ENCODE measurements at regions of chr9 and their contacts with region 1.

Region 1: DNA sequence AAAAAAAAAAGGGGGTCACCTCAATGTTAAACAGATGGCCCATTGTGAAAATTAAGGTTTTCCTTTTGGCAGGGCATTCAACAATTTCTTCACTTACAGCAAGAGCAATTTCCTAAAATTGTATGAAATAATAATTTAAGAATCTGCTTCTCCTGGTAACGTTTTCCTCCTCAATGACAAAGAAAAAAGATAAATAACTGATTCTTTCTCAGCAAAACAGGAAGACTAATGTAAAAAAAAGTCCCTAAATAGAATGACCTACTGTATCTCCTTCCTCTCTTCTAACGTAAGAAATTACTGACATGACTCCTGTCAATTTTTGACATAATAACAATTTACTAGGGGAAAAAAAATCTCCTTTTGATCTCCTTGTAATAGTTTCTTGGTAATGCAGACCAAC is 25.5 kb downstream of the ABHD17B start:
- DNase-seq: no peak
- ATAC-seq: no peak
- H3K4me3 Mint-ChIP-seq: no peak overlapping the region
- H3K27ac Mint-ChIP-seq: no peak overlapping the region
- H3K4me1 Mint-ChIP-seq: peaks cover 32% of the 10 kb centered on the region
- H3K27me3 Mint-ChIP-seq: no peaks in the 10 kb centered on the region

Region 2: DNA sequence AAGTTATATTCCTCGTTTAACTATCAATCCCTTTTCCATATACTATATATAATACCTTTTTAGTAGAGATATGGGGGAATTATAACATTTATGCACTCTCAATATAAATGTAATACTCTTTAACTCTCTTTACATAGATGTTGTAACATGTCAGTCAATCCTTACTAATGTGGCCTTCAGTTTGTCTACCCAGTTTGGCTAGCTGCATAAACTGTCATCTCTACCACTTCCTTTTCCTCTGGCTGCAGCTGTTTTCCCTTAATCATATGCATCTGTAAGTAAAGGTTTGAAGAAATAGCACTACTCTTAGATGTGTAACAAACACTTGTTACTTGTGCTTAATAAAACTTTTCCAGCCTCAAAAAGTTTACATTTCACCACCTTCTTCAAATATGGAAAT is 12.1 kb after region 1 on chr9:
- CTCF ChIA-PET with region 1: interaction called, 31 read pairs
- POLR2A ChIA-PET with region 1: interaction called, 6 read pairs
- DNase-seq: peak; percentile 65
- ATAC-seq: peak; percentile 82
- H3K4me3 Mint-ChIP-seq: peak overlapping the region; percentile 58
- H3K27ac Mint-ChIP-seq: peak overlapping the region; percentile 95
- H3K4me1 Mint-ChIP-seq: peaks cover 86% of the 10 kb centered on the region
- H3K27me3 Mint-ChIP-seq: no peaks in the 10 kb centered on the region

Region 3: GRCh38 chr9:71928832-71929604 is 43.6 kb after region 1 on chr9:
- CTCF ChIA-PET with region 1: no interaction called
- POLR2A ChIA-PET with region 1: no interaction called
- DNase-seq: no peak
- ATAC-seq: no peak
- H3K4me3 Mint-ChIP-seq: no peak overlapping the region
- H3K27ac Mint-ChIP-seq: no peak overlapping the region
- H3K4me1 Mint-ChIP-seq: no peaks in the 10 kb centered on the region
- H3K27me3 Mint-ChIP-seq: no peaks in the 10 kb centered on the region

Region 4: DNA sequence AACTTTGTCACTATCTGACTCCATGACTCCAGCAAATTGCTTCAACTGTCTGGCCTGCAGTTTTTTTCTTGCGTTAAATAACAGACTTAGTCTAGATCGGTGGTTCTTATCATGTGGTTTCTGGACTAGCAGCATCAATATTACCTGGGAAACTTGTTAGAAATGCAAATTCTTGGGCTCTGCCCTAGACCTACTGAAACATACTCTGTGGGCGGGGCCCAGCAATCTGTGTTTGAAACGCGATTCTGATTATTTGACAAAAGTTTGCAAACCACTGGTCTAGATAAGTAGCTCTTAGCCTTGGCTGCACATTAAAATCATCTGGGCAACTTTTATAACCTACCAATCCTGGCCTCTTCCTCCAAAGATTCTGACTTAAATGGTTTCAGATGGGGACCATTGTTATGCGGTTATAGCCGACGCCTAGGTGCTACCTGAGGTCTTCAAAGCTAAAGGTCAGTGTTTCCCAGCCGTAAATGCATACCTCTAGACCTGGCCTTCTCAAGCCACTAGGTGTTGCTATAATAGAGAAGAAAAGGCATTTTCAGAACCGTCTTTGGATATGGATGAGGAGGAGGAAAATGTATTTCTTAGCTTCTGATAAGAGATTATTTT is 99.9 kb after region 1 on chr9:
- CTCF ChIA-PET with region 1: no interaction called
- POLR2A ChIA-PET with region 1: no interaction called
- DNase-seq: no peak
- ATAC-seq: no peak
- H3K4me3 Mint-ChIP-seq: no peak overlapping the region
- H3K27ac Mint-ChIP-seq: no peak overlapping the region
- H3K4me1 Mint-ChIP-seq: no peaks in the 10 kb centered on the region
- H3K27me3 Mint-ChIP-seq: no peaks in the 10 kb centered on the region

Measured in activated CD8-positive, alpha-beta T cell treated with anti-CD3 and anti-CD28 coated beads, Interleukin-2, amount 10 ng/mL, durations not matched to agents 7 days and 5 days (primary cell).